Panc1 (cell line): ENCODE measurements at regions of chr7 and their contacts with region 1.

Region 1: DNA sequence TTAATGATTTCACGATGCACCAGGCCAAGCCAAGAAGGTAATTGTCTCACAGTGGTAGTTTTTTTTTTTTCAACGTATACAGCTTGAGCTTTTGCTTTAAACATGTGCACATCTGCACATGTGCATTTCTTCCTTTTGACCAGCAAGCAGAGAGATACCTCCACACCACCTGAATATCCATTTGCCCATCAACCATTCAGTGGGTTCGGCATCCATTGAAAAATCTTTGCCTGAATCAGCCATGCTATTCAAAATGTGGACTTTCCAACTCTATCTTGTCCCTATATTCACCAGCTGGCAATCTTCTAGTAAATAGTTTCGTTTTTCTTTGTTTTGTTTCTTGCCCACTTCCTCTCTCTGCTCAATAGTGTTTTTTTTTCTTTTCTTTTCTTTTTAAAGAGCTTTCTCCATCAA is 7.7 kb upstream of the TRA2A start:
- DNase-seq: no peak
- ATAC-seq: no peak
- H3K4me3 ChIP-seq: no peak overlapping the region
- H3K27ac ChIP-seq: no peak overlapping the region
- H3K4me1 ChIP-seq: no peaks in the 10 kb centered on the region
- H3K27me3 ChIP-seq: no peaks in the 10 kb centered on the region
- CTCF ChIP-seq: no peak

Region 2: GRCh38 chr7:23226844-23227450 is 312.6 kb before region 1 on chr7:
- CTCF ChIA-PET with region 1: no interaction called
- POLR2A ChIA-PET with region 1: no interaction called
- in situ Hi-C with region 1: no loop called
- intact Hi-C with region 1: no loop called
- DNase-seq: no peak
- ATAC-seq: no peak
- H3K4me3 ChIP-seq: no peak overlapping the region
- H3K27ac ChIP-seq: no peak overlapping the region
- H3K4me1 ChIP-seq: no peaks in the 10 kb centered on the region
- H3K27me3 ChIP-seq: no peaks in the 10 kb centered on the region
- CTCF ChIP-seq: no peak

Region 3: DNA sequence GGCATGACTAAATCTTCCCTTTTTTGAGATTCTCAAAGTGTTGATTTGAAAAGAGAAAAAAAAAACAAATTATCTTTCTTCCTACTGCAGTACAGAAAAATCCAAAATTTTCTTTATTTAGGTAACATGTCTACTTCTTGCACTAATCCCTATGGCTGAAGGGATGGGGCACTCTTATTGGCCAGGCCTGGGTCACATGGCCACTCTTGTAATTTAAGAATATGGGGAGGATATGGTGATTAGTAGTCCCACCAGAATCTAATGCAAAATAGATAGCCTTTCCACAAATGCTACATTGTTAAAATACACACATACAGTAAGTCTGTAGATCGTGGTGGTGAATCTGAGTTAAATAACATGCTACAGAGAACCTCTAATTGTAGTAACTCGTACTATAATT is 1026.8 kb after region 1 on chr7:
- CTCF ChIA-PET with region 1: no interaction called
- POLR2A ChIA-PET with region 1: interaction called, 12 read pairs
- in situ Hi-C with region 1: no loop called
- intact Hi-C with region 1: no loop called
- DNase-seq: no peak
- ATAC-seq: no peak
- H3K4me3 ChIP-seq: no peak overlapping the region
- H3K27ac ChIP-seq: no peak overlapping the region
- H3K4me1 ChIP-seq: no peaks in the 10 kb centered on the region
- H3K27me3 ChIP-seq: peaks cover 31% of the 10 kb centered on the region
- CTCF ChIP-seq: no peak